ENCODE measurements at regions of chr7 and their contacts with region 1.

Region 1: GRCh38 chr7:139762886-139763285 is 14.9 kb downstream of the HIPK2 start:
- DNase-seq: no peak
- H3K4me3 ChIP-seq: no peak overlapping the region
- H3K27ac ChIP-seq: no peak overlapping the region
- H3K4me1 ChIP-seq: no peaks in the 10 kb centered on the region
- H3K27me3 ChIP-seq: no peaks in the 10 kb centered on the region
- CTCF ChIP-seq: no peak

Region 2: GRCh38 chr7:139655305-139655704 is 107.6 kb before region 1 on chr7:
- CTCF ChIA-PET with region 1: no interaction called
- POLR2A ChIA-PET with region 1: no interaction called
- intact Hi-C with region 1: no loop called
- DNase-seq: no peak
- H3K4me3 ChIP-seq: no peak overlapping the region
- H3K27ac ChIP-seq: no peak overlapping the region
- H3K4me1 ChIP-seq: peaks cover 10% of the 10 kb centered on the region
- H3K27me3 ChIP-seq: no peaks in the 10 kb centered on the region
- CTCF ChIP-seq: no peak

Region 3: DNA sequence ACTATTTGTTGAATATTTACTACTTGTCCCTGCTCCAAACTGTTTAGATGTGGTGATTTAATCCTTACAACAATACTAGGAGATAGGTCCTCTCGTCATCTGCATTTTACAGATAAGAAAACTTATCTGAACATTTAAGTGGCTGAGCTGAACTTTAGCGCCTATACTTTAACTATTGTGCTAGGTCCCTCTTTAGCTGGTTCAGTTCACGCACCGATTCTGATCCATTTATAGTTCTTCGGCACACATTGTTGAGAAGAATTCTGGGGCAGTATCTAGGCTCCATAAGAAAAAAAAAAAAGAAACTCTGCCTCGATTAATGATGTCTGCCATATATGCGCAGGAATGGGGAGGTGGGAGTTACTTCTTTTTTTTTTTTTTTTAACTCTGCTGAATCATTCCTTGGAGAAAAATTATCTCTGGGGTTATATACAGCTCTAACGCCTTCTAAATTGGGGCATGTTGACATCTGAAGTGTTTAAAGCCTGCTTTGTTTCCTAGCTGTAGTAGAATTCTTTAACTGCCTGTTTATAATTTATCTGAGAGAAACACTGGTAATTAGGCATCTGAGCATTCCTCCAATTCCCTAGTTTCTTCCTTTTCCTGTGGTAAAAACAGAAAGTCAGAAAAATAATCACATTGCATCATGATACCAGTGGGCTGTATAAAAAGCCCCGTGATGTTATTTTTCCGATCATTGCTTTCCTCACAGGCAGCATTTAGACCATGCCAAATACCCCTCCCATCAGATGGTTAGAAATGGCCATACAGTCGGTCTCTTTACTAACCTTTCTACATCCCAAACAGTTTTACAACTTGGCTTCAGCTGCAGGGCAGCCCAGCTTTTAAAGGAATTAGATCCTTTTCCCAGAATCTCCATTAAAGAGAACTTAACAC is 512.4 kb after region 1 on chr7:
- CTCF ChIA-PET with region 1: interaction called, 12 read pairs
- POLR2A ChIA-PET with region 1: no interaction called
- intact Hi-C with region 1: no loop called
- DNase-seq: no peak
- H3K4me3 ChIP-seq: no peak overlapping the region
- H3K27ac ChIP-seq: no peak overlapping the region
- H3K4me1 ChIP-seq: no peaks in the 10 kb centered on the region
- H3K27me3 ChIP-seq: 0 out of 2 replicates have a peak, but pooled peaks cover 4% of the 10 kb centered on the region
- CTCF ChIP-seq: no peak

Measured in PC-9 (cell line).